ENCODE measurements at regions of chr13 and their contacts with region 1.

Region 1: GRCh38 chr13:40692946-40693345 is 26.5 kb upstream of the FOXO1 start:
- DNase-seq: no peak
- ATAC-seq: no peak
- H3K4me3 ChIP-seq: no peak overlapping the region
- H3K27ac ChIP-seq: no peak overlapping the region
- H3K4me1 ChIP-seq: no peaks in the 10 kb centered on the region
- H3K27me3 ChIP-seq: no peaks in the 10 kb centered on the region
- CTCF ChIP-seq: no peak
- POLR2A ChIP-seq: no peak

Region 2: DNA sequence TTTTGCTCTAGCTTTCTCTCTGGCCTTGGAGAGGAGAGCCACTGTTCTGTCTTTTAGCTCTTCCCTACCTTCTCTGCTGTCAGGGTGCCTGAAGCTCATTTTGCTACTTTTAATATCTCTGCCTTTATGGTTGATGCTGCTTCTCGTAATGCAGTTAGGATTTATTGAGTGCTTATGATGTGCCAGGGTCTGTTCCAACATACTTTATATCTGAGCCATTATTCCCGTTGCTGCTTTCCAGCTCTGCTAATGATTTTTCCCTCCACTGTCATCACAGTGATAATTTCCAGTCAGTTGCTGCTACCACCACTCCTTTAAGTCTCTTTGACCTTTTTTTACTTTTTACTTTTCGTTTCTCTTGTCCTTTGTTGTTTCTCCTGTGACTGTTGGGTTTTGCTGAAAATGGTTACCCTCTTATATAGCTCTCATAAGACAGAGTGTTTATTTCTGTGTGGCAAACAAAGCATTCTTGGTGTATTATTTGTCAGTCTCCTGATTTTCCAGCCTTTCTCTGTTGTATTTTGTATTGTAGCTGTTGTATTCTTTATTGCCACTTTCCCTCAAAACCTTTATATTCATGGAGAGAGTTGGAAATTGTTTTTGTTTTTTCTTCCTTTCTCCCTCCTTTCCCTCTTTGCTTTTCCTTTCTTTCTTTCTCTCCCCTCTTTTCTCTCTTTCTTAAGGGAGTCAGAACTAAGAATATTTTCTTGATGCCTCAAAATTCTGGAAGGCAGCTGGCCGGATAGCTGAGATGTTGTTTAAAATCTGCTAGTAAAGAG is 1000.1 kb before region 1 on chr13:
- in situ Hi-C with region 1: loop called (anchors 10 to 25 kb)
- intact Hi-C with region 1: no loop called
- DNase-seq: no peak
- ATAC-seq: no peak
- H3K4me3 ChIP-seq: no peak overlapping the region
- H3K27ac ChIP-seq: no peak overlapping the region
- H3K4me1 ChIP-seq: no peaks in the 10 kb centered on the region
- H3K27me3 ChIP-seq: no peaks in the 10 kb centered on the region
- CTCF ChIP-seq: no peak
- POLR2A ChIP-seq: no peak

Region 3: DNA sequence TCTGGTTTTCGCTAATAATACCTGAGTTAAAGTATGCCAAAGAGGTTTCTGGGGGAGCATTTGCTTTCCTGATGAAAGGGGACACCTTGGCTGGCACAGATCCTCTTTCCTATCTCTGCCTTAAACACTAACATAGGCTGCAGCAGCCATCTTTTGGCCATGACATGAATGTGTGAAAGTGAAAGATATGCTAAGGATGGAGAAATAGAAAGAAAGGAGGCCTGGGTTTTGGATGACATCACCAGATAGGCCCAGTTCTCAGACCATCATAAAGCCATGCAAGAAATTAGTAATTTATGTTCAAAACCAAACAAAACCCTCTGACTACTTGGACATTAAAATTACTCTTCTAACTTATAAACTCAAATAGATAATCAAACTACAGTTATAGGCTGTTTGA is 757.8 kb before region 1 on chr13:
- in situ Hi-C with region 1: loop called (anchors 5 to 25 kb)
- intact Hi-C with region 1: no loop called
- DNase-seq: no peak
- ATAC-seq: no peak
- H3K4me3 ChIP-seq: no peak overlapping the region
- H3K27ac ChIP-seq: no peak overlapping the region
- H3K4me1 ChIP-seq: no peaks in the 10 kb centered on the region
- H3K27me3 ChIP-seq: no peaks in the 10 kb centered on the region
- CTCF ChIP-seq: no peak
- POLR2A ChIP-seq: no peak